Activated B cell treated with CpG ODN at 0.5 μM for 24 hours (primary cell): ENCODE measurements at regions of chr17 and their contacts with region 1.

Region 1: DNA sequence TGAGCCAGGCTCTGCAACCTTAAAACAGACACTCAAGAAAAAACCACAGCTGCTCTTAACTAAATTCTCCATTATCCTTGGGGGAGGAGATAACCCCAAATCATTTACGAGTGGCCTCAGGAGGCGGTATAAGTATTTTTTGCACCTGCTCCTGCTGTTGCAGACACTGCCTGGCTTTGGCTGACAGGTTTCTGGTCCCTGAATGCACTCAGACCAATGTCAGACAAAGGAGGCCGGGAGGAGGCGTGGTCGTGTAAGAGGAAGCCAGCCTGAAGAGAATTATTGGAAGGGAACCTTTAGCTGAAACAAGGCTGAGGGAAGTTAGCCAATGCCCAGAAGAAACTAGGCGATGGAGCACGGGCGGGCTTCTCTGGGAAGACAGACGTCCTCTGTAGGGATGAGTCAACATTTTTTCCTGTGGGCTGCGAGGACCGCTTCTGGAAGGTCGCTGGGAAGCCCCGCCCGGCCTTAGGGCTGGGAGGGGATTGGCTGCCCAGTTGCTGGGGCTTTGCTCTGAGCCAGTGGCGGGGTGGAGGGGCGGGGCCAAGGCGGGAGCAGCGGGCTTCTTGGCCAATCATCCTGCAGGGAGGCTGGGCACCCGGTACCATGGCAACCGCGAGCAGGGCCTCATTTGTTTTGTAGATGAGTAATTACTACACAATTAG is 82.3 kb downstream of the CCDC182 start:
- DNase-seq: peak; percentile 32
- ATAC-seq: peak; percentile 80
- H3K4me3 Mint-ChIP-seq: peak overlapping the region; percentile 73
- H3K27ac Mint-ChIP-seq: peak overlapping the region; percentile 61
- H3K4me1 Mint-ChIP-seq: peaks cover 41% of the 10 kb centered on the region
- H3K27me3 Mint-ChIP-seq: no peaks in the 10 kb centered on the region
- CTCF ChIP-seq: no peak

Region 2: DNA sequence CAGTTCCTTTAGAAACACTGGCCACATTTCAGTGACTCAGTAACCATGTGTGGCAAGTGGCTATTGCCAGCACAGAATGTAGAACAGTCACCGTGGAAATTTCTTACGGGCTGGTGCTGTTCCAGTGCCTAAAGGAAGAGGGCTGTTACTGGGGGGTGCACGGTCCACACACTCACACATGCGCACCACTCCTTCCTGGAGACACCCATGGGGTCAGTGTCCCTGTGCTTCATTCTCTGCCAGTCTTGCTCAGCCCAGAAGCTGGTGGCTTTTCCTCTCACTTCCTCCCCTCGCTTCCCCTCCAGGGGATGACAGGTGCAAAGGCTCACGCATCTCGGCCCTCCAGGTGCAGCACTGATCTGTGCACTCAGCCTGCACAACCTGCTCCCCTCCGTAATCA is 33.3 kb before region 1 on chr17:
- CTCF ChIA-PET with region 1: no interaction called
- POLR2A ChIA-PET with region 1: interaction called, 3 read pairs
- intact Hi-C with region 1: loop called (anchors 5 kb)
- DNase-seq: peak; percentile 54
- ATAC-seq: peak; percentile 91
- H3K4me3 Mint-ChIP-seq: peak overlapping the region; percentile 57
- H3K27ac Mint-ChIP-seq: peak overlapping the region; percentile 83
- H3K4me1 Mint-ChIP-seq: peaks cover 66% of the 10 kb centered on the region
- H3K27me3 Mint-ChIP-seq: no peaks in the 10 kb centered on the region
- CTCF ChIP-seq: no peak

Region 3: DNA sequence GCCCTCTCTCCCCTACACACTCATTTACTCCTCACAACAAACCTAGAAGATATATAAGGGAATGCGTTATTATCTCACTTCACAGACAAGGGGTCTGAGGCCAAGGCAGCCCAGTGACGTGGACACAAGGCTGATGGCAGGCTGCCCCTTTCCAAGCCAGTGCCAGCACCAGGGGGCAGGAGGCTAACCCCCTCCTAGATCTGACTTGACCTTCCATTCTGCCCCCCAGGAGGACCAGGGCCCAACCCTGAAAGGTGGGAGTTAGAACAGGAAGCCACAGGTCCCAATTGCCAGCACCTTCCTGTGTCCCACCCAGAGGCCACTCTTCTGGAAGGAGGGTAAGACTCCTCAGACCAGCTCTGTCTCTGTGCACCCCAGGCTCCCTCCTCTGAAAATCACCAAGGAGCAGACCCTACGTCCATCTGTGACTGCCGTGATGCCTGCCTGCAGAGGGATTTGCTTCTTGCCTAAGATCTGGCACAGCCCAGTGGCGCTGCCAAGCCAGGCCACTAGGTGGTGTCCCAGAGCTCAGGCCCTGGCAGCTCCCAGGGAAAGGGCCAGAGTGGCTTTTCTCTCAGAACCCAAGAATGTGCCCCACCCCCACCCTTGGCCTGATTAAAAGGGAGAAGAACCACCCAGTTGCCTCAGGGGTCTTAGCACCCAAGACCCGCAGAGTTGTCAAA is 229.5 kb after region 1 on chr17:
- CTCF ChIA-PET with region 1: no interaction called
- POLR2A ChIA-PET with region 1: no interaction called
- intact Hi-C with region 1: no loop called
- DNase-seq: peak; percentile 77
- ATAC-seq: peak; percentile 98
- H3K4me3 Mint-ChIP-seq: no peak overlapping the region
- H3K27ac Mint-ChIP-seq: no peak overlapping the region
- H3K4me1 Mint-ChIP-seq: no peaks in the 10 kb centered on the region
- H3K27me3 Mint-ChIP-seq: peaks cover 36% of the 10 kb centered on the region
- CTCF ChIP-seq: peak; percentile 62